ENCODE measurements at regions of chr1 and their contacts with region 1.

Region 1: GRCh38 chr1:28602536-28603439 is 10.7 kb downstream of the RAB42 start:
- DNase-seq: no peak
- ATAC-seq: peak; percentile 42
- H3K4me3 Mint-ChIP-seq: no peak overlapping the region
- H3K27ac Mint-ChIP-seq: no peak overlapping the region
- H3K4me1 Mint-ChIP-seq: no peaks in the 10 kb centered on the region
- H3K27me3 Mint-ChIP-seq: no peaks in the 10 kb centered on the region
- CTCF ChIP-seq: peak; percentile 53

Region 2: DNA sequence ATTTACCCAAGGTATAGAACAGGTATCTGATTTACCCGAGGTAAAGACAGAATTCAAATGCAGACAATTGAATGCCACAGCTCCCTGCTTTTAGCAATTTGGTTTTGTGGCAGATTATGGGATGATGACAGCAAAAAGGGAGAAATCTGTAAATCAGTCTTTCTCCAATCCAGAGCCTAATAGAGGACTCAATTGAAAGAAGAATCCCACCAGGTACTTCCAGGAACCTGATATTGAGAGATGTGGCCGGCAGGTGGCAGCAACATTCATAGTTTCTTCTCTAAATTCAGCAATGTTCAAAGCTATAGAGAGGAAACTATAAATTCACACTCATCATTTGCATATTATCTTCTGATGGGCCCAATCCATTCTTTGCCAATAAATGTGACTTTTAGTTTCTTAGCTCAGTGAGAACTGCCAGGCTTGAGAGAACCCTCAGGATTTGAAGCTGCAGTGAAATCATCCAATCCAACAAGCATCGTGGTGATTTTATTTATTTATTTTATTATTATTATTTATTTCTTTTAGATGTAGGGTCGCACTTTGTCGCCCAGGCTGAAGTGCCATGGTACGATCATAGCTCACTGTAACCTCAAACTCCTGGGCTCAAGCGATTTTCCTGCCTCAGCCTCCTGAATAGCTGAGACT is 243.1 kb before region 1 on chr1:
- CTCF ChIA-PET with region 1: interaction called, 9 read pairs
- POLR2A ChIA-PET with region 1: interaction called, 5 read pairs
- intact Hi-C with region 1: loop called (anchors 1 kb)
- DNase-seq: peak; percentile 50
- ATAC-seq: peak; percentile 75
- H3K4me3 Mint-ChIP-seq: no peak overlapping the region
- H3K27ac Mint-ChIP-seq: no peak overlapping the region
- H3K4me1 Mint-ChIP-seq: peaks cover 2% of the 10 kb centered on the region
- H3K27me3 Mint-ChIP-seq: no peaks in the 10 kb centered on the region
- CTCF ChIP-seq: peak; percentile 91

Region 3: GRCh38 chr1:28409090-28409489 is 193.7 kb before region 1 on chr1:
- CTCF ChIA-PET with region 1: interaction called, 11 read pairs
- POLR2A ChIA-PET with region 1: no interaction called
- intact Hi-C with region 1: loop called (anchors 2 kb)
- DNase-seq: no peak
- ATAC-seq: no peak
- H3K4me3 Mint-ChIP-seq: no peak overlapping the region
- H3K27ac Mint-ChIP-seq: no peak overlapping the region
- H3K4me1 Mint-ChIP-seq: peaks cover 7% of the 10 kb centered on the region
- H3K27me3 Mint-ChIP-seq: no peaks in the 10 kb centered on the region
- CTCF ChIP-seq: no peak

Region 4: DNA sequence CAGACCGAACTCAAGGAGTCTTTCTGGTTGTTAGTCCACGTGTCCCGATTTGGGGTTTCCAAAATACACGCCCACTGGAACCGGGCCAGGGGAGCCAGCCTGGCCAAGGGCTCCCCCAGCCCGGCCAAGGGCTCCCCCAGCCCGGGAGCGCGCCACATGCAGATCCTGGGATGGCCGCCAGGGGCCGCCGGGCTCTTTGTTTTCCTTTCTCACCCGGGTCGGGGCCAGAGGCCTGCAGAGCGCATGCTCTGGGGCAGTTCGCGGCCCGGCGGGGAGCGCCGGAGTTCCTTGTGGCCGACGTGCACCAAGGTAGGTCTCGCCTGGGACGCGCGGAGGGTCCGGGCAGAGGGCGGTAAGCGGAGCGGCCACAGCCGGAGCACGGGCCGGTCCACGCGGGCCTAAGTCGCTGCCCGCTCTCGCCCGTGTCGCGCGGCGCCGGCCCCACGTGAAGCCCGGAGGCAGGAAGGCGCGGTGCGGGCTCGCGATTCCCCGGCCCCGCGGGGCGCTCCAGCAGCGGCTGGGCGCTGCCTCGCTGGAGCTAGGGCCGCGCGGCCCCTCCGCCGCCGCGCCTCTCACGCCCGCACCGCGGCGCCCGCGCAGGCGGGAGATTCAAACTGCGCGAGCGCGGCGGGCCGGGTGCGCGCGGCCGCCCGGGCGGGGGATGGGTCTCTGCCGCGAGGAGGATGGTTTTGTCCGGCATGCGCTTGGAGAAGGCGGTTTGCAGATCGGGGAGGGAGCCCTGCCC is 84.6 kb before region 1 on chr1:
- CTCF ChIA-PET with region 1: interaction called, 9 read pairs
- POLR2A ChIA-PET with region 1: interaction called, 16 read pairs
- intact Hi-C with region 1: loop called (anchors 1 kb)
- DNase-seq: peak; percentile 89
- ATAC-seq: peak; percentile 88
- H3K4me3 Mint-ChIP-seq: peak overlapping the region; percentile 90
- H3K27ac Mint-ChIP-seq: peak overlapping the region; percentile 73
- H3K4me1 Mint-ChIP-seq: peaks cover 28% of the 10 kb centered on the region
- H3K27me3 Mint-ChIP-seq: no peaks in the 10 kb centered on the region
- CTCF ChIP-seq: no peak

Region 5: GRCh38 chr1:28736450-28737306 is 133.9 kb after region 1 on chr1 and contains the start of gene YTHDF2:
- CTCF ChIA-PET with region 1: no interaction called
- POLR2A ChIA-PET with region 1: no interaction called
- intact Hi-C with region 1: no loop called
- DNase-seq: peak; percentile 96
- ATAC-seq: peak; percentile 93
- H3K4me3 Mint-ChIP-seq: peak within 1 kb of the TSS; percentile 96
- H3K27ac Mint-ChIP-seq: peak within 1 kb of the TSS; percentile 91
- H3K4me1 Mint-ChIP-seq: peaks cover 30% of the 10 kb centered on the region
- H3K27me3 Mint-ChIP-seq: no peaks in the 10 kb centered on the region
- CTCF ChIP-seq: peak; percentile 83
- total RNA-seq, gene YTHDF2: 70.6 and 81.2 TPM in 2 replicates

Measured in activated B cell treated with CpG ODN at 0.5 μM for 24 hours (primary cell).